ENCODE measurements at regions of chr5 and their contacts with region 1.

Region 1: GRCh38 chr5:123423278-123424149 is at the start of gene CEP120:
- DNase-seq: peak; percentile 97
- H3K4me3 ChIP-seq: peak within 1 kb of the TSS; percentile 66
- H3K27ac ChIP-seq: peak within 1 kb of the TSS; percentile 93
- H3K4me1 ChIP-seq: peaks cover 31% of the 10 kb centered on the region
- H3K27me3 ChIP-seq: no peaks in the 10 kb centered on the region
- CTCF ChIP-seq: peak; percentile 72
- total RNA-seq, gene CEP120: 17.1 and 24.5 TPM in 2 replicates

Region 2: DNA sequence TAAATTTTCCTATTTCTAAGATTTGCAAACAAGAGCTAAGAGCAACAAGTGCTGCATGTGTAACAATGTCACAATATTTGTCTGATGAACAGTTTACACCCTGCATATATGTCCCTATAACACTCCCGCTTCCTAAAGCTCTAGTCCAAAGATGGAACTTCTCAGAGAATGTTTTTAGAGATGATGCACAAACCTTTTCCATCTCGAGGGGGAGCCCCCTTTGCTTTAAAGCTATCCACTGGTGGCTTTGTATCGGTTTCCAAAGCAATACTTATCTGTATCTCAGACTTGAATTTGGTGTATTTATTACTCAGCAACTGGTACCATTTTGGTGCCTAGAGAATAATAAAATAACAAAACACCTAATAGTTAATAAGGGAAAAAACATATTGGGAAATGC is 11.3 kb before region 1 on chr5:
- CTCF ChIA-PET with region 1: no interaction called
- POLR2A ChIA-PET with region 1: no interaction called
- intact Hi-C with region 1: loop called (anchors 1 kb)
- DNase-seq: no peak
- H3K4me3 ChIP-seq: no peak overlapping the region
- H3K27ac ChIP-seq: no peak overlapping the region
- H3K4me1 ChIP-seq: no peaks in the 10 kb centered on the region
- H3K27me3 ChIP-seq: no peaks in the 10 kb centered on the region
- CTCF ChIP-seq: no peak

Region 3: GRCh38 chr5:123511648-123512605 is 88.4 kb after region 1 on chr5 and contains the start of gene CSNK1G3:
- CTCF ChIA-PET with region 1: no interaction called
- POLR2A ChIA-PET with region 1: interaction called, 18 read pairs
- intact Hi-C with region 1: loop called (anchors 1 kb)
- DNase-seq: peak; percentile 93 to 95
- H3K4me3 ChIP-seq: peak within 1 kb of the TSS; percentile 93
- H3K27ac ChIP-seq: peak within 1 kb of the TSS; percentile 84
- H3K4me1 ChIP-seq: peaks cover 30% of the 10 kb centered on the region
- H3K27me3 ChIP-seq: no peaks in the 10 kb centered on the region
- CTCF ChIP-seq: no peak
- total RNA-seq, gene CSNK1G3: 31.3 and 39.0 TPM in 2 replicates

Region 4: GRCh38 chr5:123610665-123611405 is 187.3 kb after region 1 on chr5:
- CTCF ChIA-PET with region 1: no interaction called
- POLR2A ChIA-PET with region 1: no interaction called
- intact Hi-C with region 1: loop called (anchors 2 kb)
- DNase-seq: peak; percentile 12 to 36
- H3K4me3 ChIP-seq: no peak overlapping the region
- H3K27ac ChIP-seq: peak overlapping the region; percentile 8
- H3K4me1 ChIP-seq: no peaks in the 10 kb centered on the region
- H3K27me3 ChIP-seq: no peaks in the 10 kb centered on the region
- CTCF ChIP-seq: peak; percentile 97